ENCODE measurements at regions of chr6 and their contacts with region 1.

Region 1: GRCh38 chr6:125956506-125957390 is at the start of gene HINT3:
- DNase-seq: peak; percentile 79
- H3K4me3 ChIP-seq: peak within 1 kb of the TSS; percentile 91
- CTCF ChIP-seq: peak; percentile 94

Region 2: GRCh38 chr6:125314019-125314581 is 642.6 kb before region 1 on chr6:
- CTCF ChIA-PET with region 1: interaction called, 11 read pairs
- POLR2A ChIA-PET with region 1: no interaction called
- DNase-seq: no peak
- H3K4me3 ChIP-seq: no peak overlapping the region
- CTCF ChIP-seq: peak; percentile 71

Region 3: GRCh38 chr6:125858427-125859320 is 98.1 kb before region 1 on chr6:
- CTCF ChIA-PET with region 1: interaction called, 87 read pairs
- POLR2A ChIA-PET with region 1: no interaction called
- DNase-seq: no peak
- H3K4me3 ChIP-seq: no peak overlapping the region
- CTCF ChIP-seq: peak; percentile 88

Region 4: GRCh38 chr6:125906158-125906998 is 50.4 kb before region 1 on chr6:
- CTCF ChIA-PET with region 1: interaction called, 14 read pairs
- POLR2A ChIA-PET with region 1: no interaction called
- DNase-seq: no peak
- H3K4me3 ChIP-seq: no peak overlapping the region
- CTCF ChIP-seq: peak; percentile 59

Region 5: GRCh38 chr6:125931733-125932450 is 24.9 kb before region 1 on chr6:
- CTCF ChIA-PET with region 1: interaction called, 12 read pairs
- POLR2A ChIA-PET with region 1: no interaction called
- DNase-seq: no peak
- H3K4me3 ChIP-seq: no peak overlapping the region
- CTCF ChIP-seq: no peak

Region 6: GRCh38 chr6:125986300-125987025 is 29.7 kb after region 1 on chr6 and contains the start of gene TRMT11:
- CTCF ChIA-PET with region 1: interaction called, 25 read pairs
- POLR2A ChIA-PET with region 1: no interaction called
- DNase-seq: no peak
- H3K4me3 ChIP-seq: peak within 1 kb of the TSS; percentile 95
- CTCF ChIP-seq: no peak

Region 7: GRCh38 chr6:126682433-126682832 is 725.7 kb after region 1 on chr6:
- CTCF ChIA-PET with region 1: no interaction called
- POLR2A ChIA-PET with region 1: no interaction called
- DNase-seq: no peak
- H3K4me3 ChIP-seq: no peak overlapping the region
- CTCF ChIP-seq: no peak